Activated T-helper 2 cell treated with anti-CD3 and anti-CD28 coated beads, Interferon-gamma antibody, Interleukin-2, Interleukin-4, amounts not matched to agents 10 μg/mL and 5 μg/mL and 100 μg/mL, durations not matched to agents 14 hours and 24 hours and 36 hours (primary cell): ENCODE measurements at regions of chr5 and their contacts with region 1.

Region 1: GRCh38 chr5:61575103-61575502 is 243.0 kb downstream of the ZSWIM6 start:
- DNase-seq: no peak
- H3K4me3 Mint-ChIP-seq: no peak overlapping the region
- H3K27ac Mint-ChIP-seq: no peak overlapping the region
- H3K4me1 Mint-ChIP-seq: no peaks in the 10 kb centered on the region
- H3K27me3 Mint-ChIP-seq: no peaks in the 10 kb centered on the region

Region 2: GRCh38 chr5:61534481-61535267 is 40.4 kb before region 1 on chr5:
- intact Hi-C with region 1: loop called (anchors 2 kb)
- DNase-seq: no peak
- H3K4me3 Mint-ChIP-seq: no peak overlapping the region
- H3K27ac Mint-ChIP-seq: peak overlapping the region; percentile 4
- H3K4me1 Mint-ChIP-seq: peaks cover 16% of the 10 kb centered on the region
- H3K27me3 Mint-ChIP-seq: no peaks in the 10 kb centered on the region

Region 3: GRCh38 chr5:61551637-61552313 is 23.3 kb before region 1 on chr5:
- intact Hi-C with region 1: no loop called
- DNase-seq: no peak
- H3K4me3 Mint-ChIP-seq: no peak overlapping the region
- H3K27ac Mint-ChIP-seq: no peak overlapping the region
- H3K4me1 Mint-ChIP-seq: no peaks in the 10 kb centered on the region
- H3K27me3 Mint-ChIP-seq: peaks cover under 1% of the 10 kb centered on the region

Region 4: DNA sequence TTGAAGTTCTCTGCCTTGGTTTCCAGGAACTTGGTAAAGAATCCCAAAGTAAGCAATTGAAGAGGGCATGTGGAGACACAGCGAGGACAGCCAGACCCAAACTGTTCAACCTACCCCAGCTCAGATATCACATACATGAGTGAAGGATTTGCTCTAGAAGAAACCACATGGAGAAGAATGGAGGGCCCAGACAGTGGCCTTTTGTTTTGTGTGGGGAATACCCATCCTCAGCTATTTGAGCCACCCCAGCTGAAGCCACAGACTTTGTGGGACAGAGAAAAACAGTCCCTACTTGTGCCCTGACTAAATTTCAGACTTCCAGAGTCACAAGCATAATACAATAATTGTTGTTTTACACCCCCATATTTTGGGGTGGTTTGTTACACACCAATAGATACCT is 144.0 kb after region 1 on chr5:
- intact Hi-C with region 1: no loop called
- DNase-seq: no peak
- H3K4me3 Mint-ChIP-seq: no peak overlapping the region
- H3K27ac Mint-ChIP-seq: no peak overlapping the region
- H3K4me1 Mint-ChIP-seq: no peaks in the 10 kb centered on the region
- H3K27me3 Mint-ChIP-seq: no peaks in the 10 kb centered on the region